Posterior cingulate gyrus (tissue), 11 donors: ENCODE measurements at regions of chr2 and their contacts with region 1.

Region 1: GRCh38 chr2:232438951-232439757 is 16.8 kb upstream of the ALPI start:
- DNase-seq: peak in 5 of 10 donors; percentile 30 to 84 (median 77)

Region 2: DNA sequence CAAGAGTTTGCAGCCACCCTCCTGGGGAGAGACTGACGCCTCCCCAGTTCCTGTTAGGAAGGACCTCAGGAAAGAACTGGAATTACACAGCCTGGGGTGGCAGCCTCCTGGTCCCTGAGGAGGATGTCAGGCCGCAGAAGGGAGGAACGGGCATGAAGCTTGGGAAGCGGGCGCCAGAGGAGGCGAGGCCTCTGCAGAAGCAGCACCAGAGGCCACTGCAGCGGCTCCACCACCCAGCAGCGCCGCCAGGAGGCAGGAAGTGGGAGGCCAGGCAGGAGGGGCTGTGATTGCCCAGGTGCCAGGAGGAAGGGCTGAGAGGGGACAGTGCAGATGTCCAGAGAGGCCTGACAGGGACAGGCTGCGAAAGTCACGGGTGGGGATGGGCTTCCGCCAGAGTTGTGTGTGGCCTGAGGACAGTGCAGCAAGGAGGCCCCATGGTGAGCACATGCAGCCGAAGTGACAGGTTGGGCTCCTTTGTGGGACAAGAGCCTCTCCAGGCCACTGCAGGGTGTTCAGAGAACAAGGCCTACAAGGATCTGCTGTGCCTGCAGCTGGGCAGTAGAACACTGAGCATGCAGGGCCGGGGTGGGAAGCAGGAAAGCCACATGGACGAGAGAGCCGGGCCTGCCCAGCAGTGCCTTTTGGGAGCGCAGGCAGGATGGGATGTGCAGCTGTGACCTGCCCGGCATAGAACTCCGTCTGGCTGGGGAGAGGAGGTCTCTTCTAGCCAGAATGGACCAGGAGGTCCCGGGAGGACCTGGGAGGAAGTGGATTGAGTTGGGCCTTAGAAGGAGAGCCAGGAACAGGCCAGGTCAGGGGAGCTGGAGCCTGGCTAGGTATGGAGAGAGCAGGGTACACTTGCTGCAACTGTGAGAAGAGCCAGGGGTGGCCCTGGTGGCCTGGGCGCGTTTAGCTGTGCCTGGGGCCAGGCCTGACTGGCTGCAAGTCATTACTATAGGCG is 99.8 kb before region 1 on chr2:
- intact Hi-C with region 1: loop called (anchors 5 kb)
- DNase-seq: peak in 3 of 10 donors; percentile 56 to 82 (median 67)